Gastrocnemius medialis (tissue), 4 donors: ENCODE measurements at regions of chr11 and their contacts with region 1.

Region 1: GRCh38 chr11:34653826-34654490 is 33.1 kb downstream of the EHF start:
- DNase-seq: peak; percentile 51 to 74
- ATAC-seq: peak; percentile 21 to 65
- H3K4me3 ChIP-seq: no peak overlapping the region
- H3K27ac ChIP-seq: peak overlapping the region; percentile 67 to 89 (median 82)
- H3K4me1 ChIP-seq: peaks cover 7 to 24% of the 10 kb centered on the region in 2 donors
- H3K27me3 ChIP-seq: no peaks in the 10 kb centered on the region
- CTCF ChIP-seq: no peak
- POLR2A ChIP-seq: no peak

Region 2: DNA sequence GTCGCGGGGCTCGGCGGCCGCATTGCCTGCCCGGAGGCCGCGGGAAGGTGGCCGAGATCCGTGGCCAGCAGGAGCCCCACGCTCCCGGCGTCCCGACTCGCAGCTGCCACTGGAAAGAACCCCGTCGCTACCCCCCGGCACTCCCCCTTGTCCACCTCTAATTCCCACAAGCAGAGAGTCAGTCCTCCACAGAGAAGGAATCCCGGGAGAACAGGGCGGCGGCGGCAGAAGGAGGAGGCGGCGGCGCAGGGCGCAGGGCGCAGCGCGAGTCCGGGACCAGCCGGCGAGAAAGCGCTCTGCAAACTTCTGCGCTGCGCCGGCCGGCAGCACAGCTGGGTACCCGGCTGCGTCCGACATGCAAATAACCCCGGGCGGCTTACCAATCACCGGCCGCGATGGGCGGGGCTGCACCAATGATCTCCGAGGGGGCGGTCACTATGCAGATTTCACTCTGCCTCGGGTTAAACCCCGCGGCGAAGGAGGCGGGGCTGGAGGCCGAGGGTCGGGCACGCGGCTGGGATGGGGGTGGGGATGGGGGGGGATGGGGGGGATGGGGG is 296.2 kb before region 1 on chr11 and contains the start of gene ABTB2:
- in situ Hi-C with region 1: no loop called
- intact Hi-C with region 1: no loop called
- DNase-seq: peak; percentile 97 to 98
- ATAC-seq: peak; percentile 66 to 77
- H3K4me3 ChIP-seq: peak within 1 kb of the TSS; percentile 69 to 93 (median 79)
- H3K27ac ChIP-seq: peak within 1 kb of the TSS; percentile 90 to 96 (median 91)
- H3K4me1 ChIP-seq: peaks cover 24 to 30% of the 10 kb centered on the region in 2 donors
- H3K27me3 ChIP-seq: peaks cover 0 to 11% (median 0%) of the 10 kb centered on the region in 3 donors
- CTCF ChIP-seq: no peak
- POLR2A ChIP-seq: peak; percentile 98 to 99
- total RNA-seq, gene ABTB2: 8.8 to 30.7 (median 12.2) TPM

Region 3: DNA sequence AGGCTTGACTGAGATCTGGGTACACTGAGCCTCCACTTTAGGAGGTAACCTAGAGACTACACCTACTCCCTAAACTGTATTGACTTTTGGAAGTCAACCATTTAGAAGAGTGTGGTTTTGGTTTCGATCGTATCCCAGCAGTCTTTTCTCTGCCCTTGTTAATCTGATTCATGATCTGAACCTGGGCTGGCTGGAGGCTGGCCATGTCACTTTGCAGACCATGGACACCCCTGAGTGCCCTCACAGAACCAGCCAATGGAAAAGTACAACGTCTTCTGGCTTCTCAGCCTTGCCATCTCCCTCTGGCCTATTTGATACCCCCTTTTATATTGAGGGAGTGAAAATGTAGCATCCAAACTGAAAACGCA is 22.2 kb before region 1 on chr11:
- in situ Hi-C with region 1: no loop called
- intact Hi-C with region 1: loop called (anchors 1 kb)
- DNase-seq: no peak
- ATAC-seq: no peak
- H3K4me3 ChIP-seq: no peak overlapping the region
- H3K27ac ChIP-seq: no peak overlapping the region
- H3K4me1 ChIP-seq: peaks cover 7 to 11% of the 10 kb centered on the region in 2 donors
- H3K27me3 ChIP-seq: no peaks in the 10 kb centered on the region
- CTCF ChIP-seq: no peak
- POLR2A ChIP-seq: no peak

Region 4: DNA sequence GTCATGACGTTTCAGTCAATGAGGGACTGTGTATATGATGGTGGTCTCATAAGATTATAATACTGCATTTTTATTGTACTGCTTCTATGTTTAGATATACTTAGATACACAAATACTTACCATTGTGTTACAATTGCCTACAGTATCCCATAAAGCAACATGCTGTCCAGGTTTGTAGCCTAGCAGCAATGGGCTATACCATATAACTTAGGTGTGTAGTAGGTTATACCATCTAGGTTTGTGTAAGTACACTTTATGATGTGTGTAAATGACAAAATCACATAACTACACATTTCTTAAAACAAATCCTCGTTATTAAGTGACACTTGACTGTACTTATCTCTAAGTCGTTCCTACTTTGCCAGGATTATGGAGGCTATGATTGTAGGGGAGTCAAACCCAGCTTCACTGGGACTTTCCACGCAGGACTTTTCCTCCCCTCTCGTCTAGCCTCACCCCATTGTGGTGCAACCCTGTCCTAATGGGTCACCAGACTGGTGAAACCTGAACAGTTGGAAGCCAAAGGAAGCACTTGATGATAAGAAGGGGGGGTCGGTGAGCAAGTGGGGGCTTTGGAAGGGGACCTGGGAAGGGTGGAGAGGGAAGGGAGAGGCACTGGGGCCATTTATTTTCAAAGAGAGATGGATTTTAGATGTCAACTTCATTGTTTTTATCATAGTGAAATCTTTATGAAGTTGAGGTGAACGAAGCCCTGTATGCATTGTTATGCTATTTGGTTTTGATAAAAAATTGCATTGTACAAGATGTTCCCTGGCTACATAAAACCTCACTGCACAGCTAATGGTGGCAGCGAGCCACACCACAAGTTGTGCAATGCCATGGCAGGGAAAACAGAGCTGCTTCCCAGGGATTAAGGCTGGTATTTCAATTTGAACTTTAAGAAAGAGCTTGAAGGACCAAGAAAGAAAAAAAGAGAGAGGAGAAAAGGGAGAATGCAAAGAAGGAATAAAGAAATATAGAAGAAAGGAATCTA is 96.0 kb after region 1 on chr11:
- in situ Hi-C with region 1: no loop called
- intact Hi-C with region 1: loop called (anchors 2 kb)
- DNase-seq: peak; percentile 75 to 87
- ATAC-seq: peak; percentile 88 to 90
- H3K4me3 ChIP-seq: no peak overlapping the region
- H3K27ac ChIP-seq: peak overlapping the region; percentile 24 to 78 (median 65)
- H3K4me1 ChIP-seq: peaks cover 24 to 37% of the 10 kb centered on the region in 2 donors
- H3K27me3 ChIP-seq: no peaks in the 10 kb centered on the region
- CTCF ChIP-seq: no peak
- POLR2A ChIP-seq: no peak

Region 5: DNA sequence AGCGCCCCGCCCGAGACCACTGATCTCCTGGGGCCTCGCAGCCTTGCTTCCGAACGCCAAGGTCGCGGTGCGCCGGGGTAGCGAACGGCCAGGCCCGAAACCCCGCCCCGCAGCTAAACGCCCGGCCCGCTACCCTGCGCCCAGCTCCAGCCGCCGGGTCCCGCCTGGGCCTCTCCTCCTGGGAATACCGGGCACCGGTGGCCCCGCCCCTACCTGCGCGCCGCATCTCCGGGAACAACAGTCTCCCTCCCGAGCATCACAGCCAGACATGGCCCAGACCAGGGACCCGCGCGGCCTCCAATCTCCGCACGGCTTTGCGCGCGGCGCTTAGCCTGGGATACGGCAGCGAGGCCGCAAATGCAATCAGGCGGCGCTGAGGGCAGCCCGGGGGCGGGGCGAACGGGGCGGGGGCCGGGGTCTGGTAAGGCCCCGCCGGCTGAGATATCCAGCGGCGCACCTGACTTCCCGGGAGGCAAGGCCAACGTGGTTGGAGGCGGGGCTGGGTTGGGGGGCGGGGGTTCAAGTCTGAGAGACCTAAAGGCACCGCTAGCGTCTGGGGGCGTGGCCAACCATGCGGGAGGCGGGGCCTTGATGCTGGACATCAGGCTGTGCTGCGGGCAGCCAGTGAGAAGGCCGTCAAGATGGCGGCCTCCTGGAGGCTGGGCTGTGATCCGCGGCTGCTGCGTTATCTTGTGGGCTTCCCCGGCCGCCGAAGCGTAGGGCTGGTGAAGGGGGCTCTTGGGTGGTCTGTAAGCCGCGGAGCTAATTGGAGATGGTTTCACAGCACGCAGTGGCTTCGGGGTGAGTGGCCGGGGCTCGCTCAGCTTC is 262.3 kb after region 1 on chr11 and contains the starts of genes APIP and PDHX:
- in situ Hi-C with region 1: no loop called
- intact Hi-C with region 1: loop called (anchors 10 kb)
- DNase-seq: peak; percentile 97 to 99
- ATAC-seq: peak; percentile 86 to 92
- H3K4me3 ChIP-seq: peak within 1 kb of the TSS; percentile 86 to 93 (median 91)
- H3K27ac ChIP-seq: peak within 1 kb of the TSS; percentile 96 to 99 (median 97)
- H3K4me1 ChIP-seq: peaks cover 29 to 35% of the 10 kb centered on the region in 2 donors
- H3K27me3 ChIP-seq: no peaks in the 10 kb centered on the region
- CTCF ChIP-seq: peak in 1 of 5 experiments; percentile 6
- POLR2A ChIP-seq: peak; percentile 93 to 96
- total RNA-seq, gene APIP: 22.5 to 49.1 (median 31.5) TPM
- total RNA-seq, gene PDHX: 77.7 to 101 (median 87.3) TPM

Region 6: DNA sequence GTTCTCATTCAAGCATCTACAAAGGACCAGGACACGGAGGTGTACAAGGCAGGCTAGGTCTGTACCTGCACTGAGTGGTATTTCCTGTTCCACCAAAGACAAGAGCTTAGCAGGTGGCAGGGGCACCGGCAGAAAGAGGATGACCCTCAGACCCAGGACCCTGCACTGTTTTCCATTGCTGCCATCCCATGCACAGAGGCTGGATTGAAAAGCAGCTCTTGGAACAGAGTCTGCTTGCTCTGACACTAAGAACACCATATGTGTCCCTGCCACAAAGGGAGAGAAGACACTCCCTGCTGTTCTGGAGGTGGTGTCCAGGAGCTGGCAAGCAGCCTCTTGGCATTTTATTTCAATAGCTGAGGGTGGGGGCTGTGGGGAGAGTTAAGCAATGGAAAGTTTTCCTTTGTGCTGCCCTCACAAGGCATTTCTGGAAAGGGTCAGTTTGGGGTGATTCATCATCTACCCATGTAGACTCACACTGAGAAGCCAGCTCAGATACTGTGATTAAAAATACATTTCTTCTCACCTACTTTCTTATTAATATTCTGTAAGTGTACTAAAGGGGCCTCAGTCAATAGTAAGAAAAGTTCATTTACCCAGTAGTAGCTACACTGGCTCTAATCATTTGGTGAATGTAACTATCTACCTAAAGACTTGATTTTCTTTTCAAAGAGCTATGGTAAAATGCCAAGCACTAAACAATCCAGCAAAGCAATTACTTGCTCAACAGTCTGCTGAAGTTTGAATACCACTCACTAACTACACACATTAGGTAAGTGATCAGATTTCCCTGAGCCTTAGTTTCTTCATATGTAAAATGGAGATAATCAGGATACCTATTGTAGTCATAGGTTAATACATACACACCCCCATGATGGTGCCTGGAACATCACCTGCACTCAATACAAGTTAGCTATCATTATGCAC is 710.2 kb after region 1 on chr11:
- in situ Hi-C with region 1: no loop called
- intact Hi-C with region 1: loop called (anchors 10 kb)
- DNase-seq: peak; percentile 89 to 93
- ATAC-seq: peak; percentile 83 to 86
- H3K4me3 ChIP-seq: no peak overlapping the region
- H3K27ac ChIP-seq: peak overlapping the region; percentile 64 to 86 (median 77)
- H3K4me1 ChIP-seq: peaks cover 24 to 40% of the 10 kb centered on the region in 2 donors
- H3K27me3 ChIP-seq: no peaks in the 10 kb centered on the region
- CTCF ChIP-seq: no peak
- POLR2A ChIP-seq: peak in 1 of 2 donors; percentile 10